ENCODE measurements at regions of chr20 and their contacts with region 1.

Region 1: DNA sequence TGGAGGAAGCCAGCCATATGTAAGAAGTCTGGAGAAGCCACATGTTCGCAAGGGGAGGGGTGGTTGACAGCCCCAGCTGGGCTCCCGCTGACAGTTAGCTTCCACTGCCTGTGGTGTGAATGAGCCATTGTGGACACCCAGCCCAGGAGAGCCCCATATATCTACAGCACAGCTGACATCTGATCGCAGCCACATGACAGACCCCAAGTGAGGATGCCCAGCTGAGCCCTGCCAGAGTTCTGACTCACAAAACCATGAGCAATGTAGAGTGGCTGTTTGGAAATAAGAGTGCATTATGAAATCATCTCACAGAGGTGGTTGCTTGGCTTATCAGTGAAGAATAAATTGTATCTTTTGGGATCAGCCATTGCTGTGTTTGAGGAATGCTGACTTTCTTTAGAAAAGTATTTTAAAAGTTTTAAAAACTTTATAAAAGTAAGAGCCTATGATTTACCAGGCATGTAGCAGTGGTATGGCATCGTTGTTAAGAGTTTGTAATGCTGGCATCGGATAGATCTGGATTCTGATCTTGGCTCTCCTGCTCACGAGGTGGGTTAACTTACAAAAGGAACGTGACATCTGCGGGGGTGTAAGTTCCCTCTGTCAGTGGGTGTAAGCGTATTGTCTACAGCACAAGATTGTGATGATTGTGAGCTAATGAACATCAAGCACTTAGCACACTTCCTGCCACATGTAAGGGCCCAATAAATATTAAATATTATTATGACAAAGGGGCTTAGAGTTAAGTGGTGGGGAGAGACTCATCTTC is 24.1 kb downstream of the CFAP61 start:
- DNase-seq: peak in 1 of 2 experiments; percentile 48
- H3K4me3 ChIP-seq: no peak overlapping the region
- H3K27ac ChIP-seq: no peak overlapping the region
- H3K4me1 ChIP-seq: no peaks in the 10 kb centered on the region
- H3K27me3 ChIP-seq: no peaks in the 10 kb centered on the region; the same call in 1 of the 2 replicates
- CTCF ChIP-seq: no peak

Region 2: GRCh38 chr20:19947611-19948264 is 128.7 kb before region 1 on chr20:
- CTCF ChIA-PET with region 1: no interaction called
- POLR2A ChIA-PET with region 1: interaction called, 10 read pairs
- intact Hi-C with region 1: no loop called
- DNase-seq: peak in 1 of 2 experiments; percentile 50
- H3K4me3 ChIP-seq: no peak overlapping the region
- H3K27ac ChIP-seq: no peak overlapping the region
- H3K4me1 ChIP-seq: peaks cover 9% of the 10 kb centered on the region; the same call in 1 of the 2 replicates
- H3K27me3 ChIP-seq: no peaks in the 10 kb centered on the region
- CTCF ChIP-seq: no peak

Region 3: DNA sequence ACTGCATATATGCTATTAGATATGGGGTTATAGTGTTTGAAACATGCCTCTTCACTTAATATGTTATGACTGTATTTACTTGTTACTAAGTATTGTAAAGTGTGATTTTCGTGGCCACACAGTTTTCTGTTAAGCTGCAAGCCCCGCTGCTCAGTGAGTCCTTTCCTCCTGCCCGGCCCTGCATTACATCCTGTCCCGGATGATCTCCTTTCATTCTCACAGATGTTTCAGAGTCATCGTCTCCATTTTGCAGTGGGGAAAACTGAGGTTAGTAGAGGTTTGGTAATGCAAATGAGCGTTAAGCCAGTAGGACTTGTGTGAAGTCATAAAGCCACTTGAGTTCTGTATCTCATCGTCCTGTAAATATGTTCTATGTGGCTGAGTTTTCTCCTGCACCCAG is 131.4 kb after region 1 on chr20:
- CTCF ChIA-PET with region 1: no interaction called
- POLR2A ChIA-PET with region 1: no interaction called
- intact Hi-C with region 1: no loop called
- DNase-seq: no peak
- H3K4me3 ChIP-seq: no peak overlapping the region
- H3K27ac ChIP-seq: no peak overlapping the region
- H3K4me1 ChIP-seq: no peaks in the 10 kb centered on the region
- H3K27me3 ChIP-seq: peaks cover 72% of the 10 kb centered on the region
- CTCF ChIP-seq: no peak